ENCODE measurements at regions of chr1 and their contacts with region 1.

Region 1: DNA sequence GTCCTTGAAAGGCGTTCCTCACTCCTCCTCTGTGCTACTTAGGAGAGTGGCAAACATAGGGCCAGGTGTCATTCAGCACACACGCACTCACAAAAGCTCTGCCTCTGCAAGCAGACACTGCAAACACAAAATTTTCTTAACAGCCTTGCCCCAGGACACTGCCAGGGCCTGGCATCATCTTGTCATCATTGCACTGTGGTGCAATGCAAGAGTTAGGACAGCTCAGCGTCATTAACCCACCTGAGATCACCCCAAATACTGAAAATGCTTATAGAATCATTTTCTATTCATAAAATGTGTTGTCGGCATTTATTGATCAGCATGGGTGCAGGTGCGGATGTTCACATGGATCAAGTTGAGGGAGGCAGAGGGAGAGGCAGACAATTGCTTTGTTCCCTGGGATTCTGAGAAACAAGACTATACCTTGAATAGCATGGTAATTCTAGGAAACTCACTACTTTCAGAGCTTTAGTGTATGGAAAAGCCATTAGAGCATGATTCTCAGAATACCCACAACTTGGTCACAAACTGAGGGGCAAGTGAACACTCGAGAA is 3.0 kb downstream of the ADAM30 start:
- DNase-seq: no peak
- ATAC-seq: no peak
- H3K4me3 ChIP-seq: no peak overlapping the region
- H3K27ac ChIP-seq: no peak overlapping the region
- H3K4me1 ChIP-seq: no peaks in the 10 kb centered on the region
- H3K27me3 ChIP-seq: peaks cover 0 to 27% (median 0%) of the 10 kb centered on the region in 9 donors
- CTCF ChIP-seq: no peak
- POLR2A ChIP-seq: no peak

Region 2: GRCh38 chr1:119784191-119784782 is 109.0 kb before region 1 on chr1:
- intact Hi-C with region 1: no loop called
- DNase-seq: peak in 4 of 5 donors; percentile 25 to 74 (median 61)
- ATAC-seq: peak in 2 of 4 donors; percentile 83 to 89
- H3K4me3 ChIP-seq: no peak overlapping the region
- H3K27ac ChIP-seq: peak overlapping the region in 1 of 12 donors; percentile 1
- H3K4me1 ChIP-seq: peaks cover 0 to 10% (median 0%) of the 10 kb centered on the region in 12 donors
- H3K27me3 ChIP-seq: no peaks in the 10 kb centered on the region
- CTCF ChIP-seq: no peak
- POLR2A ChIP-seq: no peak

Region 3: GRCh38 chr1:119870917-119871596 is 22.3 kb before region 1 on chr1:
- intact Hi-C with region 1: no loop called
- DNase-seq: peak; percentile 61 to 84 (median 71)
- ATAC-seq: peak; percentile 60 to 87 (median 74)
- H3K4me3 ChIP-seq: peak overlapping the region in 5 of 12 donors; percentile 4 to 48 (median 39)
- H3K27ac ChIP-seq: peak overlapping the region in 1 of 12 donors; percentile 35
- H3K4me1 ChIP-seq: peaks cover 0 to 15% (median 0%) of the 10 kb centered on the region in 12 donors
- H3K27me3 ChIP-seq: no peaks in the 10 kb centered on the region
- CTCF ChIP-seq: peak; percentile 70 to 94 (median 84)
- POLR2A ChIP-seq: no peak

Region 4: GRCh38 chr1:119911775-119912174 is 18.5 kb after region 1 on chr1:
- intact Hi-C with region 1: loop called in 1 of 10 experiments (anchors 2 kb)
- DNase-seq: no peak
- ATAC-seq: no peak
- H3K4me3 ChIP-seq: no peak overlapping the region
- H3K27ac ChIP-seq: no peak overlapping the region
- H3K4me1 ChIP-seq: no peaks in the 10 kb centered on the region
- H3K27me3 ChIP-seq: no peaks in the 10 kb centered on the region
- CTCF ChIP-seq: no peak
- POLR2A ChIP-seq: no peak

Measured in heart left ventricle (tissue), 16 donors.